ENCODE measurements at regions of chr12 and their contacts with region 1.

Region 1: GRCh38 chr12:121712461-121713256 is at the start of gene TMEM120B:
- DNase-seq: peak; percentile 92

Region 2: DNA sequence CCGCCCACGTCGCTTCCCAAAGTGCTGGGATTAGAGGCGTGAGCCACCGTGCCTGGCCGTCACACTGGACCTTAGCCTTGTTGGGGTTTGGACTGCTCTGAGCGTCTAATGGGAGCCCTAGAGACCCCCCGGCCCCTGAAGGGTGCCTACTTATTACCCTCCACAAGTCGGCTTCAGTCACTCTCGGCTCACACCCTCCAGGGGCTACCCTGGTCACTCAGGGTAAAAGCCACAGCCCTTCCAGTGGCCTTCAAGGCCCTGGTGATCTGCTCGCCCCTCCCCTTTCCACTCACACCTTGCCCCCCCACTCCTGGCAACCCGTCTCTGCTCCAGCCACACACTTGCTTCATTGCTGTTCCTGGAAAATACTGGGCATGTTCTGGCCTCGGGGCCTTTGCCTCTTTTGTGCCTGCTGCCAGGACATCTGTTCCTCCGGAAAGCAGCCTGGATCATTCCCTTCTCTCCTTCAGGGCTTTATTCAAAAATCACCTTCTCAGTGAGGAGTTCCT is 39.6 kb before region 1 on chr12:
- CTCF ChIA-PET with region 1: no interaction called
- POLR2A ChIA-PET with region 1: no interaction called
- DNase-seq: no peak

Region 3: GRCh38 chr12:121748571-121749253 is 36.1 kb after region 1 on chr12:
- CTCF ChIA-PET with region 1: no interaction called
- POLR2A ChIA-PET with region 1: interaction called, 11 read pairs
- DNase-seq: peak; percentile 28

Measured in HEK293T (cell line).